Heart right ventricle (tissue), 16 donors: ENCODE measurements at regions of chr9 and their contacts with region 1.

Region 1: GRCh38 chr9:134434894-134435506 is 108.7 kb downstream of the RXRA start:
- DNase-seq: peak; percentile 92 to 97
- ATAC-seq: peak; percentile 76 to 92 (median 88)
- H3K4me3 ChIP-seq: peak overlapping the region in 5 of 10 donors; percentile 8 to 28 (median 12)
- H3K27ac ChIP-seq: peak overlapping the region; percentile 65 to 90 (median 82)
- H3K4me1 ChIP-seq: peaks cover 42 to 90% (median 83%) of the 10 kb centered on the region in 9 donors
- H3K27me3 ChIP-seq: no peaks in the 10 kb centered on the region
- CTCF ChIP-seq: no peak

Region 2: DNA sequence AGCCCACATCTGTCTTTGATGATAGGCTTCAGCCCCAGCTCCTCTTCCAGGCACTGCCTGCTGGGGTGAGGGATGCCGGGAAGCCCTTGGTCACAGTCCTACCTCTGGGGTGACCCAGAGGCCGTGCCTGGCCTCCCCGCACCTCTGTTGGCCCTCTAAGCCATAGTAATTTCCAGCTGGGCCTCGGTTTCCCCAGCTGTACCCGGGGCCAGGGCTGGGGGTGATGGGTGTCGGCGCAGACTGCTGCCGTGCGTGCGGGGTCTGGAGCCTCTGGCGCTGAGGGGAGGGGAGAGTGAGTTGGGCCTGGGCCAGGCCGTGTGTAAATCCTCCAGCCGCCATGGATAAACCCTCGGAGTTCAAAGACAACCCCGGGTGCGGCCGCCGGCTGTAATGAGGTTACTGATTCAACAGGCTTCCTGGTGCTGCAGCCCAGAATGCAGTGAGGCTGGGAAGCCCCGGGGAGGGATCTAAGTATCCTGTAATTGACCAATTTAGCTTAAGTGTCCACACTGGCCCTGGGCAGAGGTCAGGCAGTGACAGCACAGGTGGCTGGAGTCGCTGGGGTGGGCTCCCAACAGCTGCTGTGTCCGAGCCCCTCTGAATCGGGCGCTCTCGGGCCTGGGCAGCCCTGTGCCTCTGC is 101.6 kb before region 1 on chr9:
- intact Hi-C with region 1: loop called in 8 of 10 experiments (anchors 2 to 10 kb)
- DNase-seq: peak in 1 of 2 donors; percentile 34
- ATAC-seq: no peak
- H3K4me3 ChIP-seq: peak overlapping the region in 2 of 10 donors; percentile 1 to 18
- H3K27ac ChIP-seq: peak overlapping the region in 8 of 10 donors; percentile 1 to 84 (median 44)
- H3K4me1 ChIP-seq: peaks cover 78 to 100% (median 99%) of the 10 kb centered on the region in 9 donors
- H3K27me3 ChIP-seq: no peaks in the 10 kb centered on the region
- CTCF ChIP-seq: no peak

Region 3: GRCh38 chr9:134344068-134344799 is 90.8 kb before region 1 on chr9:
- intact Hi-C with region 1: loop called in 1 of 10 experiments (anchors 10 kb)
- DNase-seq: peak; percentile 57 to 66
- ATAC-seq: peak in 5 of 8 donors; percentile 3 to 9 (median 4)
- H3K4me3 ChIP-seq: peak overlapping the region in 1 of 10 donors; percentile 6
- H3K27ac ChIP-seq: peak overlapping the region; percentile 17 to 91 (median 70)
- H3K4me1 ChIP-seq: peaks cover 81 to 100% (median 98%) of the 10 kb centered on the region in 9 donors
- H3K27me3 ChIP-seq: no peaks in the 10 kb centered on the region
- CTCF ChIP-seq: peak in 4 of 9 donors; percentile 7 to 28 (median 21)

Region 4: GRCh38 chr9:134365791-134366688 is 69.0 kb before region 1 on chr9:
- intact Hi-C with region 1: loop called in 5 of 10 experiments (anchors 5 to 10 kb)
- DNase-seq: peak; percentile 89 to 92
- ATAC-seq: peak; percentile 82 to 90 (median 87)
- H3K4me3 ChIP-seq: peak overlapping the region in 7 of 10 donors; percentile 3 to 45 (median 24)
- H3K27ac ChIP-seq: peak overlapping the region; percentile 11 to 94 (median 73)
- H3K4me1 ChIP-seq: peaks cover 59 to 91% (median 80%) of the 10 kb centered on the region in 9 donors
- H3K27me3 ChIP-seq: no peaks in the 10 kb centered on the region
- CTCF ChIP-seq: peak in 4 of 9 donors; percentile 15 to 42 (median 36)

Region 5: DNA sequence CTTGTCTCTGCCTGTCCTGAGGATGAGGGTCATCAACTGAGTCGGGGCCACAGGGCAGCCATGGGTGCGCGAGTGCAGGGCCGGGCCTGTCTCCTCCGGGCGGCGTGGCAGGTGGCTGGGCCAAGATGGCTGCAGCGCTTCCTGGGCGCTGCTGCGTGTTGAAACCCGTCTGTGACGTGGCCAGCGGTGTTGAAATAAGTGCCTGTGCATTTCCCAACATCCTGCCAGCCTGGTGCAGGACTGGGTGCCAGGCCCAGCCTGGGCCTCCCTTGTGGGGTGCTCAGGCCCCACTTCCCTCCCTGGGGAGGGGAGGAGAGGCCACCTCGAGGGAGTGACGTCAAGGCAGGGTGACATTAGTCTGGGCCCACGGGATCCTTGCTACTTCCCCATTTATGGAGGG is 63.3 kb before region 1 on chr9:
- intact Hi-C with region 1: loop called in 5 of 10 experiments (anchors 5 to 10 kb)
- DNase-seq: peak; percentile 46 to 73
- ATAC-seq: peak in 7 of 8 donors; percentile 9 to 37 (median 17)
- H3K4me3 ChIP-seq: no peak overlapping the region
- H3K27ac ChIP-seq: peak overlapping the region in 8 of 10 donors; percentile 7 to 98 (median 64)
- H3K4me1 ChIP-seq: peaks cover 73 to 94% (median 92%) of the 10 kb centered on the region in 9 donors
- H3K27me3 ChIP-seq: no peaks in the 10 kb centered on the region
- CTCF ChIP-seq: no peak

Region 6: DNA sequence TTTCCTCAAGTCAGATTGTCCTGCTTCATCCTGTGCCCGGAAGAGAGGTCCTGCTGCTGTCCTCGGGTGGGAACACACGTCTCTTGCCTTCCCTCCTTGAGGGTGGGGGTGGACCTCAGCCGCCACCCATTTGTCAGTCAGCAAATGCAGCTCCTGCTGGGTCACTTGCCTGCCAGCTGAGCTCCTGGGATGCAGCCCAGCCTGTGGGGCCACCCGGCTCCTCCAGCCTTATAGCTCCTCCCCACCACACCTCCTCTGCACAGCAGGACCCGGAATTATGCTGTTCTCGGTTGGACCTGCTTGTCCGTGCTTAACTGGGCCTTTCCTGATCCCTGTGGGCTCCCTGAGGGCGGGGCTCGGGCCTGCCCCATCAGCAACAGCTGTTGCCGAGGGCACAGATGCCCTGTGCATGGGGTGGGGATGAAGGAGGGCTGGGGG is 56.1 kb before region 1 on chr9:
- intact Hi-C with region 1: loop called in 4 of 10 experiments (anchors 5 to 10 kb)
- DNase-seq: peak; percentile 51 to 68
- ATAC-seq: peak; percentile 7 to 54 (median 31)
- H3K4me3 ChIP-seq: peak overlapping the region in 1 of 10 donors; percentile 8
- H3K27ac ChIP-seq: peak overlapping the region; percentile 0 to 98 (median 86)
- H3K4me1 ChIP-seq: peaks cover 77 to 100% (median 100%) of the 10 kb centered on the region in 9 donors
- H3K27me3 ChIP-seq: no peaks in the 10 kb centered on the region
- CTCF ChIP-seq: no peak